ENCODE measurements at regions of chr7 and their contacts with region 1.

Region 1: GRCh38 chr7:28926871-28927597 is 31.1 kb downstream of the TRIL start:
- DNase-seq: peak; percentile 90
- H3K4me3 Mint-ChIP-seq: peak overlapping the region; percentile 86
- H3K27ac Mint-ChIP-seq: peak overlapping the region; percentile 55
- H3K4me1 Mint-ChIP-seq: peaks cover 7% of the 10 kb centered on the region
- H3K27me3 Mint-ChIP-seq: no peaks in the 10 kb centered on the region
- CTCF ChIP-seq: peak; percentile 68

Region 2: DNA sequence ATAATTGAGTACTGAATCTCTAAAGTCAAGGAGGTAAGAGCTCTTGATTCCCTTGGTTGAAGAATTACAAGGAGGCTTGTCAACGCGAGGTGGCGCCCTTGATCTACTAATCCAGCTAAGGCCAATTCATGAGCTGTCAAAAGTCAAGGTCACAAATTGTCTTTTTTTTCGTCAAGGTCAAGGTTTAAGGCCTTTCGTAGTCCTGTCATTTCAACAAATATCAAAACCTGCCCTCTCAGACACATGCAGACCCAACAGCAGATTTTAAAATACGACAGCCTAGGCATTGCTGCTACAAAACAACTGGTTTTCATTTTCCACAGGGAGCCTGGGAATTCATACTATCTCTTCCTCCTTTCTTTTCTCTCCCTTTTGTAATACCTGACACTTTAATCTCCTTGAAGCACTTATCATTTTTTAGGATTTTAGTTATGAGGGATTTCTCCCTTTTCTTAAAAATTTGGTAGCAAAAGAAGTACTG is 1730.7 kb before region 1 on chr7:
- CTCF ChIA-PET with region 1: no interaction called
- POLR2A ChIA-PET with region 1: no interaction called
- intact Hi-C with region 1: loop called (anchors 10 kb)
- DNase-seq: peak; percentile 74
- H3K4me3 Mint-ChIP-seq: no peak overlapping the region
- H3K27ac Mint-ChIP-seq: no peak overlapping the region
- H3K4me1 Mint-ChIP-seq: no peaks in the 10 kb centered on the region
- H3K27me3 Mint-ChIP-seq: peaks cover 55% of the 10 kb centered on the region
- CTCF ChIP-seq: peak; percentile 83

Region 3: GRCh38 chr7:28433699-28434219 is 493.3 kb before region 1 on chr7:
- CTCF ChIA-PET with region 1: no interaction called
- POLR2A ChIA-PET with region 1: no interaction called
- intact Hi-C with region 1: no loop called
- DNase-seq: peak; percentile 20
- H3K4me3 Mint-ChIP-seq: no peak overlapping the region
- H3K27ac Mint-ChIP-seq: no peak overlapping the region
- H3K4me1 Mint-ChIP-seq: no peaks in the 10 kb centered on the region
- H3K27me3 Mint-ChIP-seq: no peaks in the 10 kb centered on the region
- CTCF ChIP-seq: no peak

Region 4: DNA sequence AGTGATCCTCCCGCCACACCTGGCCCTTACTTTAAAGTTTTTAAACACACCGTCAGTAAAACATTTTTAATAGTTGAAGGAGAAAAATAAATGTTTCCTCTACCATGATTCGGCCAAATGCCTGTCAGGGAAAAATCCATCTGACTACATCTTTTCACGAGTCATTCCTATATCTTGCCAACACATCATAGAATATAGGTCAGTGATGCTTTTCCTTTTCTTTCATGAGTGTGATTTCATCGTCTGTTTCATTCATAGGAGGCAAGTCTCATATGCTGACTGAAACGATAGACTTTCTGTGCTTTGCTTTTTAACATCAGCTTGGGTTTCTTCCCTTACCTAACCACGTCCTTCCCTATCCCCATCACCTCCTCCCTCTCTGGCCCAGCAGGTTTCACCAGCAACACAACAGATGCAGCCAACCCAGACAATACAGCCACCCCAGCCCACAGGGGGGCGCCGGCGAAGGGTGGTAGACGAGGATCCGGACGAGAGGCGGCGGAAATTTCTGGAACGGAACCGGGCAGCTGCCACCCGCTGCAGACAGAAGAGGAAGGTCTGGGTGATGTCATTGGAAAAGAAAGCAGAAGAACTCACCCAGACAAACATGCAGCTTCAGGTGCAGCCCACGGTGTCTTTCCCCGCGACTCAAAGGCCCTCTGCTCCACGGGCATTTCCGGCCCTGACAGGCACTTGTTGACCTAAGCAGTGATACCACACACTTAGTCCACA is 118.1 kb before region 1 on chr7:
- CTCF ChIA-PET with region 1: no interaction called
- POLR2A ChIA-PET with region 1: no interaction called
- intact Hi-C with region 1: no loop called
- DNase-seq: no peak
- H3K4me3 Mint-ChIP-seq: no peak overlapping the region
- H3K27ac Mint-ChIP-seq: no peak overlapping the region
- H3K4me1 Mint-ChIP-seq: peaks cover 12% of the 10 kb centered on the region
- H3K27me3 Mint-ChIP-seq: no peaks in the 10 kb centered on the region
- CTCF ChIP-seq: no peak

Region 5: DNA sequence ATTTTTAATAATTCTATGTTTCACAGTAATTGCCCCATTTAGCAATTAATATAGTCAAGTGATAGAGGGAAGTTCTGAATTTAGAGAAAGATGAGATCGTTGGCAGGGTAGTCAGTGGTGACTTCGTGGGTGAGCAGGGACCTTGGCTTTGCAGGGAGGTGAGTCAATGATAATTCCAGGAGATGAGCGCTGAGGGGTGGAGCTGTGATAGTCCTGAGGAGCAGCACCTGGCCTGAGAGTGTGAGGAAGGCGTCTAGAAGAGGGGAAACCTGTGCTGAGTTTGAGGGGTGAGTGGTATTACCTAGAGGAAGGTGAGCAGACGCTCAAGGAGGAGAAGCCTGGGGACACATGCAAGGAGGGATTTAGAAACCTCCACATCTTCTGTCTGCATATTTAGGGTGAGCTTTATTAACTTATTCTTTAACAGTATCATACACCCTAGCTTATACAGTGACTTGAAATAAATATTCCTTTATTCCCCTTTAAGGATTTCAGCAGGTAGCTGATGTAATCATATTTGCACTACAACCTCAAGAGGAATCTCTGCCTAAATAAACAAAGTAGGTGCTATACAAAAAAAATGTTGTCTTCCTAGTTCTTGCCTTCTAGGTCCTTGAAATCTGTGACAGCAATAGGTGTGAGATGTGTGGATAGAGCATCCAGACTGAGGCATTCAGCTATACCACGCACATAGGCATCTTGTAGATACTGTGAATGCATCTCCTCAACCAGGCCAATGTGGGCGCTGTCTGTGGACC is 33.2 kb after region 1 on chr7:
- CTCF ChIA-PET with region 1: interaction called, 13 read pairs
- POLR2A ChIA-PET with region 1: no interaction called
- intact Hi-C with region 1: no loop called
- DNase-seq: no peak
- H3K4me3 Mint-ChIP-seq: no peak overlapping the region
- H3K27ac Mint-ChIP-seq: no peak overlapping the region
- H3K4me1 Mint-ChIP-seq: peaks cover 11% of the 10 kb centered on the region
- H3K27me3 Mint-ChIP-seq: no peaks in the 10 kb centered on the region
- CTCF ChIP-seq: no peak

Region 6: DNA sequence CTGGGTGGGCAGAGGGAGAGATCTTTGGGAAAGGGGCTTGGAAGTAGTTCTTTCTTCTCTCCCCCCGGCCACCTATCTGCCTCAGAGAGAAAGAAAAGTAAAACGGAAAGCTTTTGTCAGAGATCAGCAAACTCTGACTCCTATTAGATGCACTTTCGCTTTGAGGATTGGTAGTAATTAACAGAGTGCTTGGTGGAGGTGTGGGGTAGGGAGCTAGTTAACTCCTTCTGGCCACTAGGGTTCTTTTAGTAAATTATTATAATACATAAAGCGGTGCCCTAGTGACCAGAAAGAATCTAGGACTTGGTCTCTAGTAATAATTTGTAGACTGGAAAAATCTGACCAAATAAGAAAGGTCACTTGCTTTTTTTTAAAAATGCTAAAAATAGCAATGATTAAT is 164.7 kb after region 1 on chr7:
- CTCF ChIA-PET with region 1: interaction called, 712 read pairs
- POLR2A ChIA-PET with region 1: no interaction called
- intact Hi-C with region 1: no loop called
- DNase-seq: no peak
- H3K4me3 Mint-ChIP-seq: peak overlapping the region; percentile 54
- H3K27ac Mint-ChIP-seq: peak overlapping the region; percentile 83
- H3K4me1 Mint-ChIP-seq: peaks cover 7% of the 10 kb centered on the region
- H3K27me3 Mint-ChIP-seq: no peaks in the 10 kb centered on the region
- CTCF ChIP-seq: no peak

Region 7: DNA sequence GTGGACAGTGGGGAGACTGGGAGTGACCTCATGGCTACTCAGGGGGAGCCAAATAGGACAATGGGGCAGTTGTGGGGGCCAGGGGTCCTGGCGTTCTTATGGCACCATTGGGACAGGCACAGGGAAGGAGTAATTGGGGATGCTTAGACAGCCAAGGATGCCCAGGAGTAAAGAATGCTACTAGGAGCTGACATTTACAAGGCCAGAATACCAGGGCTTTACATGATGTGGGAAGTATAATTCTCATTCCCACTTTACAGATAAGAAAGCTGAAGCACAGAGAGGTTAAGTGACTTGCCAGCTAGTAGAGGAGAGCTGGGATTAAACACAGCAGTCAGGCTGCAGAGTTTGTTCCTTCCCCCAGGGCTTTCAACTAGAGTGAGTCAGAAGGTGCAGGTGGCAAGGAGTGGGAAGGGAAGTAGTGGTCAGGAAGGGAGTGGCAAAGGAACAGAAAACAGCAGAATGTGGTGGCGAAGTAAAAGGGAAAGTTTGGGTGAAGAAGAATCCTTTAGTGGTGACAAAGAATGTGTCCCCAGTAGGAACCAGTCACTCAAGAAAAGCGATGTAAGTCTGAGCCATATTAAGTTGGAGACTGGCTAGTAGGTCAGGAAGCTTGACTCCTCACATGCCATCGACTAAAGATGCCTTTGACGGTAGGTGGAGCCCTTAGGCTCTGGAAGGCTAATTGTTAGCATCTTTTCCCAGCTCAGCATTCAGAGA is 186.5 kb after region 1 on chr7:
- CTCF ChIA-PET with region 1: interaction called, 712 read pairs
- POLR2A ChIA-PET with region 1: interaction called, 13 read pairs
- intact Hi-C with region 1: no loop called
- DNase-seq: peak; percentile 82
- H3K4me3 Mint-ChIP-seq: peak overlapping the region; percentile 68
- H3K27ac Mint-ChIP-seq: peak overlapping the region; percentile 84
- H3K4me1 Mint-ChIP-seq: peaks cover 51% of the 10 kb centered on the region
- H3K27me3 Mint-ChIP-seq: no peaks in the 10 kb centered on the region
- CTCF ChIP-seq: peak; percentile 40

Region 8: DNA sequence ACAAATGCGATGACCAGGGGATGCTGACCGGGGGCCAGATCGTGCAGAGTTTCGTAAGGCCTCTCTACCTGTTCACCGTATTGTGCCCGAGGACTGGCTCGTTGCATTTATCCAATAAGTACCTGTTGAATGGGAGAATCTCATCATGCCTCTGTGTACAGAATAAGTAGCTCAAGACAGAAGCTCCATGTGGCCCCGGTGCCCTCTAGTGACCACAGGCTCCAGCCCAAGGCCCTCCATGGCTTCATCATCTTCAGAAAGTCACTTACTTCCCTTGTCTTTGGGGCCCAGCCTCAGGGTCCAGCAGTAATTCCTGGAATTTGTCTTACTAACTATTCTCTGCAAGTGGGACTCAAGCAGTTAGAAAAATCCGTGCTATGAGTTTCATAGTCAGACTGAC is 418.6 kb after region 1 on chr7:
- CTCF ChIA-PET with region 1: interaction called, 6 read pairs
- POLR2A ChIA-PET with region 1: interaction called, 4 read pairs
- intact Hi-C with region 1: loop called (anchors 1 kb)
- DNase-seq: peak; percentile 43
- H3K4me3 Mint-ChIP-seq: no peak overlapping the region
- H3K27ac Mint-ChIP-seq: no peak overlapping the region
- H3K4me1 Mint-ChIP-seq: peaks cover 19% of the 10 kb centered on the region
- H3K27me3 Mint-ChIP-seq: no peaks in the 10 kb centered on the region
- CTCF ChIP-seq: peak; percentile 63

Measured in MCF 10A (cell line).